PC-9 (cell line): ENCODE measurements at regions of chr1 and their contacts with region 1.

Region 1: DNA sequence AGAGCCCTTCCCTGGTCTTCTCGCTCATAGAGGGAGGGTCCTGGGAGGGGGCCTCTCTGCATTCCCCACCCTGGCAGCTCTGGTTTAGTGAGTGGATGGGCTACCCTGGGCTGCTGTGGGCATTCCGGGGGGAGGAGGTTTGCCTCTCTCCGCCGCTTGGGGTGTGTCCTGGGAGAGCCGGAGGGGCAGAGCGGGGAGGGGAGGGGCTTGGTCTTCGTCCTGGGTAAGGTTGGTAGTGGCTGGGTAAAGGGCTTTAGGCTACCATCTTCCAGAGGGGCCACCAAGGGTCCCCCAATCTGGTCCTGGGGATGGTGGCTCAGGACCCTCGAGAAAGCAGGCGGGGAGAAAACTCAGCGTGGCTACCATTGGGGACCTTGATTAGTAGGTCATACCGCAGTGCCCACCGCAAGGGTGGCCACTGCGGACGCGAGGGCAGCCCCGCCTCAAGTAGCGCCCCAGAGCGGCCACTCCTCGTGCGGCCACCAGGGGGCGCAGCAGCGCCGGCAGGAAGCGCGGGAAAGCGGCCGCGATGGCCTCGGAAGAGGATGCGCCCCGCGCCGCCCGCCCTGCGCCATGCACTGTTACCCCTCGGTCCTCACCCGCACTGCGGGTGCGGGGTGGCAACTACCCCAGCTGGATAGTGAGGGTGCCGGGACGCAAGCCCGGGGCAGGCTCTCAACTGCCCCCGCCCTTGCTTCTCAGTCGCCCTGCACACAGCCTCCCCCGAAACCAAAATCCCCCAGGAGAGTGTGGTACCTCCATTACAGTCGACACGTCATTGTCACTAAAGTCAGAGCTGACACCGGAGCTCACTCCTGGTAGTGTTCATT is 44.1 kb upstream of the SLC25A33 start:
- DNase-seq: peak in 1 of 2 experiments; percentile 55
- H3K4me3 ChIP-seq: no peak overlapping the region
- H3K27ac ChIP-seq: no peak overlapping the region
- H3K4me1 ChIP-seq: no peaks in the 10 kb centered on the region
- H3K27me3 ChIP-seq: no peaks in the 10 kb centered on the region
- CTCF ChIP-seq: peak; percentile 88

Region 2: DNA sequence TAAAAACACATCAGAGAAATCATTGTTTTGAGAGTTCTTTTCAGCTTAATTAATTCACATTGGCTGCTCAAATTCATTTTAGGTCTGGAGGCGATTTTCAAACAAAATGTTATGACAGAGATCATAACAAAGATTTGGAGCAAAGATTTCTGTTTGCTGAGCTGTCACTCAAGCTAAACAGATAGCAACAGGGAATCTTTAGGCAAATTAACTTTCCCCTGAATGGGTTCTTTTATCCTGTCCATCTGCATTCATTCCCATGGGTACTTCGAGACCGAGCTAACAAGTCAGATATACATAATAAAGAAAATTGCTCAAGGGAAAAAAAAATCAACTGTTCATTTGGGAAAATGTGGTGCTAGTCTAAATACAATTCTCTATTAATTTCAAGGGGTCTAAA is 579.7 kb before region 1 on chr1:
- CTCF ChIA-PET with region 1: no interaction called
- POLR2A ChIA-PET with region 1: no interaction called
- intact Hi-C with region 1: loop called (anchors 5 kb)
- DNase-seq: no peak
- H3K4me3 ChIP-seq: no peak overlapping the region
- H3K27ac ChIP-seq: no peak overlapping the region
- H3K4me1 ChIP-seq: no peaks in the 10 kb centered on the region
- H3K27me3 ChIP-seq: no peaks in the 10 kb centered on the region
- CTCF ChIP-seq: no peak

Region 3: GRCh38 chr1:9110669-9111356 is 384.3 kb before region 1 on chr1:
- CTCF ChIA-PET with region 1: no interaction called
- POLR2A ChIA-PET with region 1: interaction called, 7 read pairs
- intact Hi-C with region 1: loop called (anchors 1 kb)
- DNase-seq: peak; percentile 91
- H3K4me3 ChIP-seq: no peak overlapping the region
- H3K27ac ChIP-seq: peak overlapping the region; percentile 16; the same call in 1 of the 2 replicates
- H3K4me1 ChIP-seq: peaks cover 8% of the 10 kb centered on the region
- H3K27me3 ChIP-seq: no peaks in the 10 kb centered on the region
- CTCF ChIP-seq: peak; percentile 90

Region 4: GRCh38 chr1:9181176-9181906 is 313.8 kb before region 1 on chr1:
- CTCF ChIA-PET with region 1: no interaction called
- POLR2A ChIA-PET with region 1: no interaction called
- intact Hi-C with region 1: loop called (anchors 5 kb)
- DNase-seq: peak in 1 of 2 experiments; percentile 64
- H3K4me3 ChIP-seq: peak overlapping the region; percentile 48; the same call in 1 of the 2 replicates
- H3K27ac ChIP-seq: no peak overlapping the region
- H3K4me1 ChIP-seq: peaks cover 16% of the 10 kb centered on the region
- H3K27me3 ChIP-seq: no peaks in the 10 kb centered on the region
- CTCF ChIP-seq: peak; percentile 84

Region 5: DNA sequence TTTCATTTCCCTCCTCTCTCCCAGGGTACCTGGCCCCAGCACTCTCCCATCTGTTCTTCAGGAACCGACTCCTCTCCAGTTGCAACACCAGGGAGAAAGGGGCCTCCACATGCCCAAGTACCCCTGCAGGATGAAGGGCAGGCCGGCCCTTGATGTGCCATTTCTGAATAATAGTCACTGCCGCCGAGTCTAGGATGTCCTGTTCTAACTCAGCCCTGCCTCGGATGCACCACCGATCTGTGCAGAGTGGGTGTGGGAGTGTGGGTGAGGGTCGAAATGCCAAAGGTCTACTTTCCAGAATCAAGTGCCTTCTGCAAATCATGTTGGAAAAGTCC is 227.8 kb before region 1 on chr1:
- CTCF ChIA-PET with region 1: interaction called, 7 read pairs
- POLR2A ChIA-PET with region 1: no interaction called
- intact Hi-C with region 1: loop called (anchors 1 kb)
- DNase-seq: no peak
- H3K4me3 ChIP-seq: no peak overlapping the region
- H3K27ac ChIP-seq: no peak overlapping the region
- H3K4me1 ChIP-seq: peaks cover 6% of the 10 kb centered on the region; the same call in 1 of the 2 replicates
- H3K27me3 ChIP-seq: no peaks in the 10 kb centered on the region
- CTCF ChIP-seq: peak; percentile 34; the same call in 1 of the 2 replicates

Region 6: GRCh38 chr1:9292361-9293240 is 202.5 kb before region 1 on chr1 and contains the start of gene SPSB1:
- CTCF ChIA-PET with region 1: interaction called, 3 read pairs
- POLR2A ChIA-PET with region 1: no interaction called
- intact Hi-C with region 1: loop called (anchors 1 kb)
- DNase-seq: peak; percentile 37 to 54
- H3K4me3 ChIP-seq: peak within 1 kb of the TSS; percentile 83
- H3K27ac ChIP-seq: peak within 1 kb of the TSS; percentile 60; the same call in 1 of the 2 replicates
- H3K4me1 ChIP-seq: peaks cover 42% of the 10 kb centered on the region
- H3K27me3 ChIP-seq: no peaks in the 10 kb centered on the region
- CTCF ChIP-seq: no peak
- total RNA-seq, gene SPSB1: 27.9 and 33.8 TPM in 2 replicates

Region 7: DNA sequence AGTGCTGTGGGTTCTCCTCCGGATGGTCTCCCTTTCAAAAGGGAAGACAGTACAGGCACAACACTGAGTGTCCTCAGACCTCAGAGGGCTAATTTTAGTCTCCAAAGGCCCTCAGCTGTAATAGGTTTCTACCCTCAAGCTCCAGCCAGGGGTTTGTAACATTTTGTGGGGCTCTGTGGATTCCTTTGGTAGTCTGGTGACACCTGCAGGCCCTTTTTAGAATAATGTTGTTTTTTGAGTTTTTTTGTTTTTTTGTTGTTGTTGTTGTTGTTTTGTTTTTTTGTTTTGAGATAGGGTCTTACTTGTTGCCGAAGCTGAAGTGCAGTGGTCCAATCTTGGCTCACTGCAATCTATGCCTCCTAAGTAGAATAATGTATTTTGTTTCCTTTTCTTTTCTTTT is 78.6 kb after region 1 on chr1:
- CTCF ChIA-PET with region 1: interaction called, 6 read pairs
- POLR2A ChIA-PET with region 1: interaction called, 3 read pairs
- intact Hi-C with region 1: loop called (anchors 1 kb)
- DNase-seq: no peak
- H3K4me3 ChIP-seq: no peak overlapping the region
- H3K27ac ChIP-seq: no peak overlapping the region
- H3K4me1 ChIP-seq: no peaks in the 10 kb centered on the region
- H3K27me3 ChIP-seq: no peaks in the 10 kb centered on the region
- CTCF ChIP-seq: peak; percentile 66